Endothelial cell of umbilical vein (primary cell): ENCODE measurements at regions of chr1 and their contacts with region 1.

Region 1: GRCh38 chr1:26233903-26234643 is at the start of gene CEP85:
- DNase-seq: peak; percentile 98
- H3K4me3 ChIP-seq: peak within 1 kb of the TSS; percentile 35 to 78 (median 65)
- H3K27ac ChIP-seq: peak within 1 kb of the TSS; percentile 9
- H3K4me1 ChIP-seq: peaks cover 12% of the 10 kb centered on the region
- H3K27me3 ChIP-seq: no peaks in the 10 kb centered on the region
- CTCF ChIP-seq: peak; percentile 87 to 92
- POLR2A ChIP-seq: peak; percentile 81
- total RNA-seq, gene CEP85: 16.2 and 17.8 TPM in 2 replicates

Region 2: DNA sequence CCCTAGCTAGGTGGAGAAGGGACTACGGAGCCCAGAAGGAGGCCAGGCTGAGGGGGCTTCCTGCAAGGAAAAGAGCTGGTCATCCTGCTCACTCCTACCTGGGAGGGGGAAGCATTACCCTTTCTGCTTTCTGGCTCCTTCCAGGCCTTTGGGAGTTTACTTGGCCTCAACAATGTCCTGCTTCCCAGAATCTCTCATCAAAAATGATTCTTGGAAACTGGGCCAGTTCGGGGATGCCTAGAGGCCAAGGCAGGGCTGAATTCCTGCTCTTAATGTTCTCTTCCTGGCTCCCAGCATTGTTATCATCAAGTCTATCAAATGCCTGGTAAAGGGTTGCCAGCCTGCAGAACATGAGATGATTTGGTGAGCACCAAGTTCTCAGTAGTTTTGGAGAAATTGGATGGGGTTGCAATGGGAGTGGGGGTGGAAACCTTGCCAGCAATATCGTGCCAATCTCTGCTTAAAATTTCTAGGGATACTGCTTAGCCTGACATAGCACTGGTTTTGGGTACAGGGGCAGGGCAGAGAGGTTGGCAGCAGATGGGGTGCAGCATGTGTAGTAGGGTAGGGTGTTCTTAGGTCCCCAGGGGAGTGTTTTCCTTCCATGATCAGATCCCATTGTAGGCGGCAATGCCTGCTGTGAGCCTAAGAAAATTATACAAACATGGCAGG is 228.5 kb before region 1 on chr1:
- CTCF ChIA-PET with region 1: no interaction called
- POLR2A ChIA-PET with region 1: no interaction called
- dilution Hi-C with region 1: no loop called
- intact Hi-C with region 1: no loop called
- DNase-seq: no peak
- H3K4me3 ChIP-seq: no peak overlapping the region
- H3K27ac ChIP-seq: no peak overlapping the region
- H3K4me1 ChIP-seq: no peaks in the 10 kb centered on the region
- H3K27me3 ChIP-seq: peaks cover 3 to 5% of the 10 kb centered on the region in 2 experiments
- CTCF ChIP-seq: no peak
- POLR2A ChIP-seq: no peak

Region 3: GRCh38 chr1:26257222-26257621 is 23.1 kb after region 1 on chr1:
- CTCF ChIA-PET with region 1: interaction called, 11 read pairs
- POLR2A ChIA-PET with region 1: no interaction called
- dilution Hi-C with region 1: no loop called
- intact Hi-C with region 1: no loop called
- DNase-seq: no peak
- H3K4me3 ChIP-seq: no peak overlapping the region
- H3K27ac ChIP-seq: no peak overlapping the region
- H3K4me1 ChIP-seq: no peaks in the 10 kb centered on the region
- H3K27me3 ChIP-seq: no peaks in the 10 kb centered on the region
- CTCF ChIP-seq: no peak
- POLR2A ChIP-seq: no peak